ENCODE measurements at regions of chr5 and their contacts with region 1.

Region 1: DNA sequence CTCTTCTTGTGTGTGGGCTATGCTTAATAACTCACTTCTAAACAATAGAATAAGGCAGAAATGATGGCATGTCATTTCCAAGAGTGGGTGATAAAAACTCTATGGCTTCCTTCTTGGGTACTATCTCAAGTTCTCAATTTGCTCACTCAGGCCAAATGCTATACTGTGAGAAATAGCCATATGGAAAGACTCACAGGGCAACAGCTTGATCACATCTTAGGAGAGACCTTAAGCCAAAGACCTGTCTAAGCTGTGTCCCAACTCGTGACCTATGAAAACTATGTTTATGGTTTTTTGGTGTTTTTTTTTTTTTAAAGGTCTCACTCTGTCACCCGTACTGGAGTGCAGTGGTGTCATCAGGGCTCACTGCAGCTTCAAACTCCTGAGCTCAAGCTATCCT is 2.1 kb upstream of the UIMC1 start:
- DNase-seq: no peak
- H3K4me3 ChIP-seq: no peak overlapping the region
- H3K27ac ChIP-seq: no peak overlapping the region
- H3K27me3 ChIP-seq: no peaks in the 10 kb centered on the region
- CTCF ChIP-seq: no peak

Region 2: GRCh38 chr5:177022384-177023308 is 13.9 kb after region 1 on chr5 and contains the start of gene ZNF346:
- CTCF ChIA-PET with region 1: interaction called, 11 read pairs
- POLR2A ChIA-PET with region 1: interaction called, 5 read pairs
- DNase-seq: peak; percentile 86
- H3K4me3 ChIP-seq: peak within 1 kb of the TSS; percentile 90
- H3K27ac ChIP-seq: no peak within 1 kb of the TSS
- H3K27me3 ChIP-seq: no peaks in the 10 kb centered on the region
- CTCF ChIP-seq: peak; percentile 47
- polyA plus RNA-seq, gene ZNF346: 15.0 and 15.3 TPM in 2 replicates

Measured in AG04450 (cell line).